CD8-positive, alpha-beta memory T cell (primary cell): ENCODE measurements at regions of chr3 and their contacts with region 1.

Region 1: GRCh38 chr3:48465531-48466378 is 19.2 kb downstream of the ATRIP start:
- DNase-seq: peak; percentile 65 to 85 (median 74)
- H3K4me3 ChIP-seq: peak overlapping the region; percentile 71
- H3K4me3 Mint-ChIP-seq: peak overlapping the region; percentile 86 to 94 (median 90)
- H3K27ac ChIP-seq: peak overlapping the region; percentile 89
- H3K27ac Mint-ChIP-seq: peak overlapping the region; percentile 96 to 99 (median 97)
- H3K4me1 ChIP-seq: peaks cover 54% of the 10 kb centered on the region
- H3K4me1 Mint-ChIP-seq: peaks cover 41 to 61% (median 61%) of the 10 kb centered on the region in 3 donors
- H3K27me3 ChIP-seq: no peaks in the 10 kb centered on the region
- H3K27me3 Mint-ChIP-seq: no peaks in the 10 kb centered on the region

Region 2: DNA sequence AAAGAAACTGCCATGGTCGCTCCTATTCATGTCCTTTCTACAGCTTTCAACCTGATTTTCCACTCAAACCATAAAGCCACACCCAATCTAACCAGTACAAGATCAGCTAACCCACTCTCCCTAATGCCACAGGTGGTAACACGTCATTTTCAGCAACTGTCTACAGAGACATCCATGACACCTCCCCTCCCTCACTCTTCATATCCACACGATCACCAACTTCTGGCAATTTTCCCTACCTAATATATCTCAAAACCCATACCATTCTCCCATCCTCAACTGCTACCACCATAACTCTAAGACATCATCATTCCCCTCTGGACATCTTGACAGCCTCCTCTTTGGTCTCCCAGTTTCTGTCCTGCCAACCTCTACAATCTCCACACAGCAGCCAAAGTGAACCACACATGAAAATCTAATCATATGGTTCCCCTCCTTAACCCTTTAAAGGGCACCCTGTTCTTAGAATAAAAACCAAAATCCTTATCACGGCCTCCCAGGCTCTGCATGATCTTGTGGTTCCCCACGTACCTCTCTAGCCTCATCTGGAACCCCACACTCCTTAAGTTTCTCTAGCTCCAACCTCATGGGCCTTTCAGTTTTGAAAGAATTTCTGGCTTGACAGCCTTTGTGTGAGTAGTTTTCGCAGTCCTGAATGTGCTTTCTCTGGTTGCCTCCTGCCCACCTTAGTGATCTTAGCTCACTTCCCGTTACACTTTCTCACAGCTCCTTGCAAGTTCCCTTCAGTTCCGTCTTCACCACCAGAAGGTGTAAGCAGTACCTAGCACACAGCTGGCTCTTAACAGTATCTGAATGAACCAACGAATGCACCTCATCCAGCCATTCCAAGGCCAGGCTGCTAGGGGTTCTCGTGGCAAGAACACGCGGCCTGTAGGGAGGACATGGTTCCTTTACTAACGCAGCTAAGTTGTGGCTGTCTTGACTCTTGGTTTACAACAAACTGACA is 165.7 kb before region 1 on chr3:
- CTCF ChIA-PET with region 1: no interaction called
- POLR2A ChIA-PET with region 1: no interaction called
- DNase-seq: peak; percentile 4 to 57 (median 38)
- H3K4me3 ChIP-seq: peak overlapping the region; percentile 90
- H3K4me3 Mint-ChIP-seq: peak overlapping the region; percentile 87 to 99 (median 91)
- H3K27ac ChIP-seq: peak overlapping the region; percentile 86
- H3K27ac Mint-ChIP-seq: peak overlapping the region; percentile 14 to 99 (median 89)
- H3K4me1 ChIP-seq: peaks cover 20% of the 10 kb centered on the region
- H3K4me1 Mint-ChIP-seq: peaks cover 34 to 55% (median 37%) of the 10 kb centered on the region in 3 donors
- H3K27me3 ChIP-seq: no peaks in the 10 kb centered on the region
- H3K27me3 Mint-ChIP-seq: no peaks in the 10 kb centered on the region

Region 3: DNA sequence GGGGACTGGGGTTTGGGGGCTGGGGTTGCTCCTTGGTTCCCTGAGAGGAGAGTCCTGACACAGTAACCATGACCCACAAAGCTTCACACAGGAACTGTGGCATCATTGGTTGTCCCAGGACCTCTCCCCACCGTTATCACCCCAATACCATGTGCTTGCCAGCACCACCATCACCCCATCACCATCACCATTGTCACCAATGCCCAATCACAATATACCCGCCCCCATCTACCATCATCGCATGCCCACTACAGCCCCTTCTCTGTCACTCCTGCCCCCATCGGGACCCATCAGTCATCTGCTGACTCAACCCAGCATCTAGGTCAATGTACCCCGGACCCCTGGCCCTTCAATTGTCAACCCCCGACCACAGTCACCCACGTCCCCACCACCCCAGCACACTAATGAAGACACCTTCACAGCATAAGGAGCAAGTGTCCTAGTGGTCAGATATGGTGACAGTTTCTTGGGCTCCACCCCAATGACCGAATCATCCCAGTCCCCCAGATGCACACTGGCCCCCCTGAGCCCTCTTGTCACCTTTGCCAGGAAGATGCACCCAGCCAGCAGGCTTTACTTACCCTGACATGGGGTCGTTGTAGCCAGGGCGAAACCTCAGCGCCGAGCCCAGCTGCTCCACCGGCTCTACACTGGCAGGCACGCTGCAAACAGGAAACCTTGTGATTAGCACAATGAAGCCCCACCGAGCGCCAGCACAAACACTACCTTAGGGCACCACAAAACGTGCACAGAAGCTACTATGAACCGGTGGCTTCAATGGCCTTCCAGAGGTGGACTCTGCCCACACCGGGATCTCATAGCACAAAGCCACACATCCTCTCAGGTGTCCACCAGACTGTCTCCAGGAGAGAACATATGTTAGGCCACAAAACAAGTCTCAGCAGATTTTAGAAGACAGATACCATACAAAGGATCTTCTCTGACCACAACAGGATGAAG is 13.1 kb after region 1 on chr3:
- CTCF ChIA-PET with region 1: interaction called, 5 read pairs
- POLR2A ChIA-PET with region 1: interaction called, 11 read pairs
- DNase-seq: peak; percentile 42 to 87 (median 80)
- H3K4me3 ChIP-seq: peak overlapping the region; percentile 60
- H3K4me3 Mint-ChIP-seq: peak overlapping the region; percentile 86 to 98 (median 93)
- H3K27ac ChIP-seq: peak overlapping the region; percentile 78
- H3K27ac Mint-ChIP-seq: peak overlapping the region; percentile 93 to 99 (median 98)
- H3K4me1 ChIP-seq: peaks cover 30% of the 10 kb centered on the region
- H3K4me1 Mint-ChIP-seq: peaks cover 37 to 58% (median 41%) of the 10 kb centered on the region in 3 donors
- H3K27me3 ChIP-seq: no peaks in the 10 kb centered on the region
- H3K27me3 Mint-ChIP-seq: no peaks in the 10 kb centered on the region

Region 4: GRCh38 chr3:48518638-48519276 is 53.0 kb after region 1 on chr3:
- CTCF ChIA-PET with region 1: no interaction called
- POLR2A ChIA-PET with region 1: no interaction called
- DNase-seq: no peak
- H3K4me3 ChIP-seq: no peak overlapping the region
- H3K4me3 Mint-ChIP-seq: peak overlapping the region in 4 of 7 donors; percentile 28 to 35 (median 32)
- H3K27ac ChIP-seq: no peak overlapping the region
- H3K27ac Mint-ChIP-seq: peak overlapping the region in 5 of 8 donors; percentile 12 to 77 (median 59)
- H3K4me1 ChIP-seq: peaks cover 65% of the 10 kb centered on the region
- H3K4me1 Mint-ChIP-seq: peaks cover 56 to 61% (median 60%) of the 10 kb centered on the region in 3 donors
- H3K27me3 ChIP-seq: no peaks in the 10 kb centered on the region
- H3K27me3 Mint-ChIP-seq: no peaks in the 10 kb centered on the region

Region 5: GRCh38 chr3:48623851-48624547 is 158.2 kb after region 1 on chr3:
- CTCF ChIA-PET with region 1: no interaction called
- POLR2A ChIA-PET with region 1: no interaction called
- DNase-seq: no peak
- H3K4me3 ChIP-seq: no peak overlapping the region
- H3K4me3 Mint-ChIP-seq: peak overlapping the region in 1 of 7 donors; percentile 8
- H3K27ac ChIP-seq: no peak overlapping the region
- H3K27ac Mint-ChIP-seq: peak overlapping the region in 4 of 8 donors; percentile 6 to 66 (median 34)
- H3K4me1 ChIP-seq: no peaks in the 10 kb centered on the region
- H3K4me1 Mint-ChIP-seq: peaks cover 6 to 11% (median 9%) of the 10 kb centered on the region in 3 donors
- H3K27me3 ChIP-seq: no peaks in the 10 kb centered on the region
- H3K27me3 Mint-ChIP-seq: peaks cover 0 to 2% of the 10 kb centered on the region in 2 donors